Breast epithelium (tissue), 4 donors: ENCODE measurements at regions of chr1 and their contacts with region 1.

Region 1: DNA sequence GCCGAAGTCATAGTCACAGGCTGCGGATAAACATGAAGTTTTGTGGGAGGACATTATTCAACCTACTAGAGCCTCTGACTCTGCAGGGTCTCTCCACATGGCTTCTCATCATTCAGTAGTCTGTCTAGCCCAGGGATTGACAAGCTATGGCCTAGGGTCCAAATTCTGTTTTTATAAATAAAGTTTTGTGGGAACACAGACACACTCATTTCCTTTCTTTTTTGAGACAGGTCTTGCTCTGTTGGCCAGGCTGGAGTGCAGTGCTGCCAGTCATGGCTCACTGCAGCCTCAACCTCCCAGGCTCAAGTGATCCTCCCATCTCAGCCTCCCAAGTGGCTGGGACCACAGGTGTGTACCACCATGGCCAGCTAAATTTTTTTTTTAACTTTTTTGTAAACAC is 8.1 kb upstream of the ENO1 start:
- DNase-seq: no peak
- H3K4me3 ChIP-seq: no peak overlapping the region
- H3K27ac ChIP-seq: peak overlapping the region in 1 of 2 donors; percentile 68
- H3K4me1 ChIP-seq: peaks cover 0 to 5% of the 10 kb centered on the region in 2 donors
- H3K27me3 ChIP-seq: no peaks in the 10 kb centered on the region
- CTCF ChIP-seq: no peak
- POLR2A ChIP-seq: no peak

Region 2: GRCh38 chr1:8252266-8252951 is 634.2 kb before region 1 on chr1:
- intact Hi-C with region 1: no loop called
- DNase-seq: no peak
- H3K4me3 ChIP-seq: no peak overlapping the region
- H3K27ac ChIP-seq: no peak overlapping the region
- H3K4me1 ChIP-seq: peaks cover 0 to 5% of the 10 kb centered on the region in 2 donors
- H3K27me3 ChIP-seq: no peaks in the 10 kb centered on the region
- CTCF ChIP-seq: no peak
- POLR2A ChIP-seq: no peak

Region 3: GRCh38 chr1:8423650-8424538 is 462.7 kb before region 1 on chr1:
- intact Hi-C with region 1: no loop called
- DNase-seq: no peak
- H3K4me3 ChIP-seq: peak overlapping the region; percentile 87 to 97 (median 96)
- H3K27ac ChIP-seq: peak overlapping the region; percentile 98 to 99
- H3K4me1 ChIP-seq: peaks cover 8 to 9% of the 10 kb centered on the region in 2 donors
- H3K27me3 ChIP-seq: no peaks in the 10 kb centered on the region
- CTCF ChIP-seq: peak in 2 of 3 donors; percentile 26 to 35
- POLR2A ChIP-seq: no peak

Region 4: GRCh38 chr1:8926707-8927694 is 40.4 kb after region 1 on chr1:
- intact Hi-C with region 1: loop called (anchors 2 kb)
- DNase-seq: no peak
- H3K4me3 ChIP-seq: no peak overlapping the region
- H3K27ac ChIP-seq: no peak overlapping the region
- H3K4me1 ChIP-seq: no peaks in the 10 kb centered on the region
- H3K27me3 ChIP-seq: no peaks in the 10 kb centered on the region
- CTCF ChIP-seq: no peak
- POLR2A ChIP-seq: no peak